PC-9 (cell line): ENCODE measurements at regions of chr17 and their contacts with region 1.

Region 1: GRCh38 chr17:8409966-8410864 is 12.6 kb upstream of the RNF222 start:
- DNase-seq: peak; percentile 49 to 81
- H3K4me3 ChIP-seq: no peak overlapping the region
- H3K27ac ChIP-seq: no peak overlapping the region
- H3K4me1 ChIP-seq: no peaks in the 10 kb centered on the region; the same call in 1 of the 2 replicates
- H3K27me3 ChIP-seq: no peaks in the 10 kb centered on the region
- CTCF ChIP-seq: peak; percentile 80

Region 2: GRCh38 chr17:8745586-8746500 is 335.6 kb after region 1 on chr17:
- CTCF ChIA-PET with region 1: no interaction called
- POLR2A ChIA-PET with region 1: no interaction called
- intact Hi-C with region 1: loop called (anchors 10 kb)
- DNase-seq: peak in 1 of 2 experiments; percentile 59
- H3K4me3 ChIP-seq: peak overlapping the region; percentile 31; the same call in 1 of the 2 replicates
- H3K27ac ChIP-seq: no peak overlapping the region
- H3K4me1 ChIP-seq: no peaks in the 10 kb centered on the region
- H3K27me3 ChIP-seq: peaks cover 18% of the 10 kb centered on the region
- CTCF ChIP-seq: peak; percentile 76